Activated naive CD4-positive, alpha-beta T cell treated with anti-CD3 and anti-CD28 coated beads, Interleukin-2, amount 10 ng/mL, durations not matched to agents 7 days and 5 days (primary cell): ENCODE measurements at regions of chr14 and their contacts with region 1.

Region 1: GRCh38 chr14:67426983-67427606 is 15.1 kb upstream of the PLEK2 start:
- DNase-seq: peak; percentile 82
- H3K4me3 Mint-ChIP-seq: no peak overlapping the region
- H3K27ac Mint-ChIP-seq: peak overlapping the region; percentile 55
- H3K4me1 Mint-ChIP-seq: peaks cover 10% of the 10 kb centered on the region
- H3K27me3 Mint-ChIP-seq: peaks cover 50% of the 10 kb centered on the region

Region 2: GRCh38 chr14:67151131-67151569 is 275.9 kb before region 1 on chr14:
- CTCF ChIA-PET with region 1: no interaction called
- DNase-seq: no peak
- H3K4me3 Mint-ChIP-seq: no peak overlapping the region
- H3K27ac Mint-ChIP-seq: no peak overlapping the region
- H3K4me1 Mint-ChIP-seq: no peaks in the 10 kb centered on the region
- H3K27me3 Mint-ChIP-seq: no peaks in the 10 kb centered on the region

Region 3: GRCh38 chr14:67411820-67412421 is 15.2 kb before region 1 on chr14 and contains the start of gene PLEK2:
- CTCF ChIA-PET with region 1: interaction called, 31 read pairs
- DNase-seq: peak; percentile 54
- H3K4me3 Mint-ChIP-seq: peak within 1 kb of the TSS; percentile 44
- H3K27ac Mint-ChIP-seq: no peak within 1 kb of the TSS
- H3K4me1 Mint-ChIP-seq: peaks cover 13% of the 10 kb centered on the region
- H3K27me3 Mint-ChIP-seq: peaks cover 47% of the 10 kb centered on the region

Region 4: DNA sequence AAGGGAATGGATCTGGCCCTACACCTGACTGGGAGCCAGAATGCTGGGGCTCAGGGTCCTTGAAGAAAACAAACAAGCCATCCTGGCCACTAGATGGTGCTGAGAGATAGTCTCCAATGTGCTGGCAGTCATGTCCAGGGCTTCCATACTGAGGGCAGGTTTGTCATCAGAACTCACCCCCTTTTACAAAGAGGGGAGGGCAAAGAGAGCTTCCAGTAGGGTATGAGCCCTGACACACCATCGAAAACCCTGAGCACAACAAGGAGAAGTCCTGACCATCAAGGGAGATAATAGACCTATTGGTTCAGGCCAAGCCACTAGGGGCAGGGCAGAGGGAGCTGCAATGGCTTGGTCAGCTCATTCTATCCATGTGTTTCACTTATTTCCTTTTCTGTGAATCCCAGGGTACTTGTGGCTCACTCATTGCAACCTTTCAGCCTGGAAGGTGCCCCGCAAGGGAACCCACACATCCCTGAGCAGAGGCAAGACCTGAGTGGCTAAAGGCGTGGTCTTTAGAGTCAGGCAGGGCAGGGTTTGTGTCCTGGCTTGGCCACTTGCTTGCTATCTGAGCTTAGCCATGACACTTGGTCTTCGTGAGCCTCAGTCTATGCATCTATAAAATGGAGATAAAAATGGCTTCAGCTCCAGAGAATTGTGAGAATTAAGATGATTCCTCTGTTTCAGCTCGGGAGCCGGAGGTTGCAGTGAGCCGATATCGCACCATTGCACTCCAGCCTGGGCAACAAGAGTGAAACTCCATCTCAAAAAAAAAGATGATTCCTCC is 99.8 kb after region 1 on chr14:
- CTCF ChIA-PET with region 1: interaction called, 52 read pairs
- DNase-seq: peak; percentile 63
- H3K4me3 Mint-ChIP-seq: no peak overlapping the region
- H3K27ac Mint-ChIP-seq: no peak overlapping the region
- H3K4me1 Mint-ChIP-seq: no peaks in the 10 kb centered on the region
- H3K27me3 Mint-ChIP-seq: peaks cover 88% of the 10 kb centered on the region

Region 5: GRCh38 chr14:67571272-67571850 is 144.3 kb after region 1 on chr14:
- CTCF ChIA-PET with region 1: interaction called, 206 read pairs
- DNase-seq: peak; percentile 81
- H3K4me3 Mint-ChIP-seq: no peak overlapping the region
- H3K27ac Mint-ChIP-seq: no peak overlapping the region
- H3K4me1 Mint-ChIP-seq: no peaks in the 10 kb centered on the region
- H3K27me3 Mint-ChIP-seq: peaks cover 16% of the 10 kb centered on the region

Region 6: DNA sequence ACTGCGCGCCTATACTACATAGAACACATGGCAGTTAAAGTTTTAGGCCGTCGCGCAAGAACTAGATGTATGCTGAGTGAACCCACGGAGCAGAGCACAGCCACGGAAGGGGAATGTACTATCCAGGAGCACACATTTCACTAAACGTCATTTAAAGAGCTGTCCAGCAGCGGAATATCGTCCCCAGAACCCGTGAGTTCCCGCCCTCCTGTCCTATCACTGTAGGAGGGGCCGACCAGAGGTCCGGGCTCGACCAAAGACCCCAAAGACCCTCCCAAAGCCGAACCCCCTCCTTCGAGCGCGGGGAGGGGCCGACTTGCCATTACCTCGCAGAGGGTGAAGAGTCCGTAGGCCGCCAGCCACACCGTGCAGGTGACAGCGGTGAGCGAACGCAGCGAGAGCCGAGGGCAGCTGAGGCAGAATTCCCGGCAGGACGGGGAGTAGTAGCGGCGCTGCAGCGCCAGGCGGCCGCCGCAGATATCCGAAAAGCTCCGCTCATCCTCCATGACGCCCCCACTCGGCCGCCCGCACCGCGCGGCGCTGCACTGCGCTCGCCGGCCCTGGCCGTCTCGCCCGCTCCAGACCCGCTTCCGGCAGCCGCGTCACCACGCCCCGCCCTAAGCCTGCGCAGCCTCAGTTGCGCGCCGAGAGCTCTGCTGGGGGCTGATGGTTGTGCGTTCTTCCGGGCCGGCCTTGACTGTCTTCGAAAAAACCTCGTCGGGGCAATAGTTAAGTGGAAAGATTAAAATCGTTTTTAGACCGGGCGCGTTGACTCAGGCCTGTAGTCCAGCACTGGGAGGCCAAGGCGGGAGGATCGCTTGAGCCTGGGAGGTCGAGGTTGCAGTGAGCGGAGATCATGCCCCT is 172.8 kb after region 1 on chr14 and contains the start of gene PIGH:
- CTCF ChIA-PET with region 1: interaction called, 15 read pairs
- DNase-seq: peak; percentile 95
- H3K4me3 Mint-ChIP-seq: peak within 1 kb of the TSS; percentile 94
- H3K27ac Mint-ChIP-seq: peak within 1 kb of the TSS; percentile 87
- H3K4me1 Mint-ChIP-seq: peaks cover 41% of the 10 kb centered on the region
- H3K27me3 Mint-ChIP-seq: peaks cover 17% of the 10 kb centered on the region